WTC11 (cell line): ENCODE measurements at regions of chr16 and their contacts with region 1.

Region 1: DNA sequence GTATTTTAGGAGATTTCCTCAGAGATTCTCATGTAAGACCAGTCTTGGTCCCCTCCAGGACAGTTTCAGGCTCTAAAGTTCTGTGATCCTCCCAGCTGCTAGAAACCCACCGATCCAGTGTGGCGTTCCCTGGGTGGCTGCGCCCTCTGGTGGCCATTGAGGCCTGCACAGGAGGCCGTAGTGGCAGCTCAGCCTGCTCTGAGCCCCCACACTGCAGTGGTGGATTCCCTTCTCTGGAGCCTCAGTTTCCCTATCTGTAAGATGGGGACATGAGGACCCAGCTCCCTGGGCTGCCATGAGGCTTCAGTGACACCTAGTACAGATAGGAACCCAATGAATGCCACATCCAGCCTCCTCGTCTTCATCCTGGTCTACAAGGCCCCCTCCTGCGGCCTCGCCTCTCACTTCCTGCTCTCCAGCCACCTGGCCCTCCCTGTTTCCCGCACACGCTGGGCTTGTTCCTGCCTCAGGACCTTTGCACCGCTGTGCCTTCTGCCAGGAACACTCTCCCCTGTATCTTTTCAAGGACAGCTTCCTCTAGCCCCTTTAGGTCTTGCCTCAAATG is 16.5 kb downstream of the CCDC102A start:
- DNase-seq: peak; percentile 88
- ATAC-seq: peak; percentile 90
- H3K4me3 Mint-ChIP-seq: no peak overlapping the region
- H3K27ac Mint-ChIP-seq: no peak overlapping the region
- H3K4me1 Mint-ChIP-seq: peaks cover 11% of the 10 kb centered on the region; the same call in 1 of the 2 replicates
- H3K27me3 Mint-ChIP-seq: peaks cover 5% of the 10 kb centered on the region; the same call in 1 of the 2 replicates
- CTCF ChIP-seq: peak; percentile 91

Region 2: GRCh38 chr16:57300387-57301125 is 219.3 kb before region 1 on chr16:
- CTCF ChIA-PET with region 1: interaction called, 13 read pairs
- POLR2A ChIA-PET with region 1: no interaction called
- DNase-seq: peak; percentile 99
- ATAC-seq: peak; percentile 85
- H3K4me3 Mint-ChIP-seq: no peak overlapping the region
- H3K27ac Mint-ChIP-seq: no peak overlapping the region
- H3K4me1 Mint-ChIP-seq: peaks cover 16% of the 10 kb centered on the region
- H3K27me3 Mint-ChIP-seq: peaks cover 13% of the 10 kb centered on the region
- CTCF ChIP-seq: peak; percentile 83

Region 3: GRCh38 chr16:57447186-57447962 is 72.5 kb before region 1 on chr16 and contains the starts of genes CIAPIN1 and COQ9:
- CTCF ChIA-PET with region 1: interaction called, 13 read pairs
- POLR2A ChIA-PET with region 1: interaction called, 3 read pairs
- DNase-seq: peak; percentile 92
- ATAC-seq: peak; percentile 99
- H3K4me3 Mint-ChIP-seq: peak within 1 kb of the TSS; percentile 91
- H3K27ac Mint-ChIP-seq: peak within 1 kb of the TSS; percentile 32
- H3K4me1 Mint-ChIP-seq: peaks cover 13% of the 10 kb centered on the region
- H3K27me3 Mint-ChIP-seq: no peaks in the 10 kb centered on the region
- CTCF ChIP-seq: no peak
- total RNA-seq, gene CIAPIN1: 85.9 to 94.7 TPM (median 87.9 TPM) in 3 replicates
- total RNA-seq, gene COQ9: 39.2 to 40.2 TPM (median 39.8 TPM) in 3 replicates

Region 4: GRCh38 chr16:57462209-57462977 is 57.5 kb before region 1 on chr16 and contains the start of gene POLR2C:
- CTCF ChIA-PET with region 1: interaction called, 71 read pairs
- POLR2A ChIA-PET with region 1: interaction called, 5 read pairs
- DNase-seq: peak; percentile 94
- ATAC-seq: peak; percentile 93
- H3K4me3 Mint-ChIP-seq: peak within 1 kb of the TSS; percentile 100
- H3K27ac Mint-ChIP-seq: peak within 1 kb of the TSS; percentile 99
- H3K4me1 Mint-ChIP-seq: peaks cover 4% of the 10 kb centered on the region
- H3K27me3 Mint-ChIP-seq: no peaks in the 10 kb centered on the region
- CTCF ChIP-seq: peak; percentile 95
- total RNA-seq, gene POLR2C: 67.9 to 75.4 TPM (median 67.9 TPM) in 3 replicates

Region 5: GRCh38 chr16:57475711-57476339 is 44.1 kb before region 1 on chr16:
- CTCF ChIA-PET with region 1: interaction called, 80 read pairs
- POLR2A ChIA-PET with region 1: interaction called, 5 read pairs
- DNase-seq: peak; percentile 95
- ATAC-seq: peak; percentile 81
- H3K4me3 Mint-ChIP-seq: peak overlapping the region; percentile 43; the same call in 1 of the 2 replicates
- H3K27ac Mint-ChIP-seq: peak overlapping the region; percentile 27; the same call in 1 of the 2 replicates
- H3K4me1 Mint-ChIP-seq: peaks cover 75% of the 10 kb centered on the region
- H3K27me3 Mint-ChIP-seq: peaks cover 6% of the 10 kb centered on the region
- CTCF ChIP-seq: peak; percentile 72

Region 6: DNA sequence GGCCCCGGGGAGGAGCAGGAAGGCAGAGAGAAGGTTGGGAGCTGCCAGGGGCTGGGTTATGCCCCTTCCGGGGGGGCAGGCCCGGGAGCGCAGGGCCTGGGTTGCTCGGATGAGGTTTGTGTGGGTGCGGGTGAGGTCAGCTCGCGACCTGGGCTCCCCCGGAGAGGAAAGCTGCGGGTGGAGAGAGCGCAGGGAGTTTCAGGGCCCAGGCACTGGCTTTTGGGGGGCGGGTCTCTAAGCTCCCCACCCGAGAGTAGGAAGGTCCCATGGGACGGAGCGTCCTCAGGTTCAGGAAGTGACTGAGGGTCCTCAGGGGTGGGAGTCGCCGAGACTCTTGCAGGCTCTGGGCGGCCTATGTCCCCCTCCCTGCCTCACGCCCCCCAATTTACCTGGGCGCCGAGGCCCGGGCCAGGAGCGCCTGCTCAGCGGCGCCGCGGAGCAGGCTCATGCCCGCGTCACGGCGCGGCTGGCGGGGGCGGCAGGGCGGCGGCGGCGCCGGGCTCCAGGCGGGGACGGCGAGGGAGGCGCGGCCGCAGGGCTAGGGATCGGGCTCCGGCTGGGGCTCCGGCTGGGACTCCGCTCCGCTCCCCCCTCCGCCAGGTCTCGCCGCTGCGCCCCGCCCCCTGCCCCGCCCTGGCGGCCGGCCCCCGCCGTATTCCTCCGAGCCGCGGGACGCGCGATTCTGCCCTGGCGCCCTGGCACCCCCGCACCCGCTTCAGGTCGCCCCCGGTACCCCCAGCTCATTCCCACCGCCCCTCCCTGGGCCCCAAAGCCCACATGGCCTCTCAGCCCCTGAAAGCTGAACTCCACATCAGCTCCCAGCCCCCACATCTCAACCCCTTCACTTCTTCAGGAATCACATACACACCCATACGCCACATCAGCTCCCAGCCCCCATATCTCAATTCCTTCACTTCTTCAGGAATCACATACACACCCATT is 33.7 kb before region 1 on chr16 and contains the start of gene DOK4:
- CTCF ChIA-PET with region 1: interaction called, 48 read pairs
- POLR2A ChIA-PET with region 1: no interaction called
- DNase-seq: peak; percentile 80
- ATAC-seq: peak; percentile 92
- H3K4me3 Mint-ChIP-seq: peak within 1 kb of the TSS; percentile 76
- H3K27ac Mint-ChIP-seq: no peak within 1 kb of the TSS
- H3K4me1 Mint-ChIP-seq: peaks cover 16% of the 10 kb centered on the region
- H3K27me3 Mint-ChIP-seq: peaks cover 21% of the 10 kb centered on the region
- CTCF ChIP-seq: no peak
- total RNA-seq, gene DOK4: 21.8 to 25.0 TPM (median 21.9 TPM) in 3 replicates

Region 7: DNA sequence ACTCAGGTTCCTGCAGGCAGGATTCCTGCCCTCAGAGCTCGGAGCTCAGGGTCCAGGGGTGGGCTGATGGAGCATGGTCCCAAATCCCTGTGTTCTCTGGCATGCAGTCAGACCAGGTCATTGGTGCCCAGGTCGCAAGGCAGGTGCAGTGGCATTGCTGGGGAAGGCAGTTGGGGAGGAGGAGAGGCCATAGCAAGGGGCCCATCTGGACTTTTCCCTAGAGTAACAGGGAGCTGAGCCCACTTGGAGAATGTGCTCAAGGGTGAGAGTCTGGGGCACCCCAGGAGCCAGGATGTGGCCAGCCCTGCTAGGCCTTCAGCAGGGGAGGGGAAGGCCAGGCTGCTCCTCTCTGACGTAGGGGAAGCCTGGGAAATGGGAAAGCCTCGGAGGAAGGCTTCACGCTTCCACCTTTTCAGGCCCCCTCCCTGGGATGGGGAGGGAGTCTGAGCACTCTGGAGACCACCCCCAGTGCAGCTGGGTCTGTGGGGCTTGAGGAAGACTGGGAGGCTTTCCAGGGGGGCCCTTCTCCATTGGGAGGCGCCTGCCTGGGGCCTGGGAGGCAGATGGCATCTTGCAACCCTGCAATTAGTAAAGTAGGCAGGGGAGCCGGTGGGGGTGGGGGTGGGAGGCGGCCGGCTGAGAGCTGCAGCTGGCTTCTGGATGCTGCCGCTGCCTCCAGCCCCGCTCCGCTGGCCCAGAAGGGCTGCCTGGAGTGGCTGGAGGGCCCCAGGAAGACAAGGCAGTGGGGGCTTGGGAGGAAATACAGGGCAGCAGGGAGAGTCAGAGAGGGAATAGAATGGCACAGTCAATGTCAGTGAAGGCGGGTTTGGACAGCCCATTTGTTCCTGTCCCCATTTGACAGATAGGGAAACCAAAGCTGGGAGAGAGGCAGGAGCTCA is 12.5 kb before region 1 on chr16:
- CTCF ChIA-PET with region 1: interaction called, 46 read pairs
- POLR2A ChIA-PET with region 1: no interaction called
- DNase-seq: no peak
- ATAC-seq: peak; percentile 56
- H3K4me3 Mint-ChIP-seq: no peak overlapping the region
- H3K27ac Mint-ChIP-seq: no peak overlapping the region
- H3K4me1 Mint-ChIP-seq: peaks cover 17% of the 10 kb centered on the region
- H3K27me3 Mint-ChIP-seq: no peaks in the 10 kb centered on the region
- CTCF ChIP-seq: no peak